Left lung (tissue), 14 donors: ENCODE measurements at regions of chr17 and their contacts with region 1.

Region 1: DNA sequence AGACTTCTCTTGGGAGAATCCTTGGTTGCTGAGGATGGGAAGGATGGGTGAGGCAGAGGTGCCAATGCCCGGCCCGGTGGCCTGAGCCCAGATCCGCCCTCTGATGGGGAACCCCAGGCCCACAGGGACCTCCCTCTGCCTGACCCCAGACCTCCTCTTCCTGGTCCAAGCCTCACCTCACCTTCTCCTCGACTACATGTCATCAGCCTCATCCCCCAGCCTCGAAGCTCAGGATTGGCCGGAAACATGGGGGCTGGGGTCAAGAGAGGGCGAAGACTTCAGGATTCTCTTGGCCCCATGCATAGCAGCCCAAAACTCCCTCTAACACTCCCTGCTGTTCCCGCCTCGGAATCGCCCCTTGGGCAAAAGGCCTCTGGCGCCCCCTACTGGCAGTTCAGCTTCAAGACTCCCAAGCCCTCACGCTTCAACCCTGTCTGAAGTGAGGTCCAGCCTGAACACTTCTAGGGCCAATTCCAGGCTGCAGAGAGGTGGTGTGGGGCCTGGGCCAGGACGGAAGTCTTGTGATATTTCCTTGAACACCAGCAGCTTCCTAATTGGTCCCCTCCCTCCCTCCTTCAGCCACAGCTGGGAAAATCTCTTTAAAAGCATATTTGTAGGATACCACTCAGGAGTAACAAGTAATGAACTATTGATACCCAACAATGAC is 47.2 kb downstream of the ARHGAP27 start:
- DNase-seq: peak; percentile 74 to 96 (median 90)
- ATAC-seq: peak; percentile 96
- H3K4me3 ChIP-seq: no peak overlapping the region
- H3K27ac ChIP-seq: no peak overlapping the region
- H3K4me1 ChIP-seq: peaks cover 0 to 10% of the 10 kb centered on the region in 2 donors
- H3K27me3 ChIP-seq: no peaks in the 10 kb centered on the region
- CTCF ChIP-seq: peak; percentile 97

Region 2: DNA sequence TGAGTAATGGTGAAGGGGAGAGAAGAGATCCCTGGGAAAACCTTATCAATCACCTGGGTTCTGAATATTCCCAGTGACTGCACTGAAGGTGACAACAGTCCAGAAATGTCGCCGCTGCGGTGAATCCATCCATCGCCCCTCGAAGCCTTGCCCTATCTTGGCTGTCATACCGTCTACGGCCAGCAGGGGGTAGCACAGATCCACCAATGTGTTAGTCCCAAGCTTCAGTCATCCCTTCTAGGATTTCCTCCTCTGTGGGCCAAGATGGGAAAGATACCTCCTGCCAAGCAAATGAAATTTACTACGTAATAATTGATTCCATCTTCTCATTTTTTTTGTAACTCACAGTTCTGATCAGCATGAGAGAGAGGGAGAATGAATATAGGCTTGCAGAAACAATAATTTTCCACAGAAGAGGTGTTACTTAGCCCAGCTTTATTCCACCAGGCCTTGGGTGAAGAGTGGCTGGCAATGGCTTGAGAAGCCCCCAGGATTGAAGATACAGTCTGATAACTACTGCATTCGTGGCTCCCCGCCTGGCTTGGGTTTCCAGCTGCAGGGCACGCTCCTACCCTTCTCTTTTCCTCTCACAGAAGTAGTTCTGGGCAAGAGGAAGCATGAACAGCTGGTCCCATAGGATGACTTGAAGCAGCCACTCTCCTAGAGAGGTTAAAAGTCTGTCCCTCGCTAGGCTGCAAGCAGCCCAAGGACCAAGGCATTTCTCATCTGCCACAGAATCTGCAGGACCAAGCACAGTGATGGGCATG is 166.4 kb before region 1 on chr17:
- intact Hi-C with region 1: loop called in 1 of 2 experiments (anchors 5 kb)
- DNase-seq: peak; percentile 79 to 92 (median 85)
- ATAC-seq: peak; percentile 91
- H3K4me3 ChIP-seq: no peak overlapping the region
- H3K27ac ChIP-seq: no peak overlapping the region
- H3K4me1 ChIP-seq: peaks cover 4 to 45% of the 10 kb centered on the region in 2 donors
- H3K27me3 ChIP-seq: peaks cover 0 to 20% of the 10 kb centered on the region in 2 donors
- CTCF ChIP-seq: peak; percentile 97 to 98

Region 3: GRCh38 chr17:45277216-45277849 is 108.1 kb before region 1 on chr17:
- intact Hi-C with region 1: loop called (anchors 5 to 10 kb)
- DNase-seq: peak; percentile 81 to 96 (median 93)
- ATAC-seq: peak; percentile 88
- H3K4me3 ChIP-seq: no peak overlapping the region
- H3K27ac ChIP-seq: peak overlapping the region; percentile 55 to 78
- H3K4me1 ChIP-seq: peaks cover 12 to 21% of the 10 kb centered on the region in 2 donors
- H3K27me3 ChIP-seq: no peaks in the 10 kb centered on the region
- CTCF ChIP-seq: peak; percentile 64 to 85

Region 4: DNA sequence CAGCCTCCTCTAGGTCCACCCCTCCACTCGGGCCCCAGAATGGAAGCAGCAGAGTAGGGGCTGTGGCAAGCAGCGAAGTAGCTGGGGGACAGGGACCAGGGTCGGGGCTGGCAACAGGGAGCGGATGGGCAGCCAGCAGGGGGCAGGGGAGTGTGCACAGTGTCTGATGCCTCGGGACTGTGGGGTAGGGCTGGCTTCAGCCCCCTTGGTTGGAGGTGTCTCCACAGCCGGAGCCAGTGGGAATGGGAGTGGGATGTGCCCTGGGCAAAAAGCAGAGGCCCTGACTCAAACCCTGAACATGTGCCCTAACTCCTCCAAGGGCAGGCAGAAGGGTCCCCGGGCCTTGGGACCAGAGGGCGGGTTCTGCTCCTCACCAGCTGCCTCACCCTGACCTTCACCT is 65.7 kb after region 1 on chr17:
- intact Hi-C with region 1: no loop called
- DNase-seq: peak in 1 of 4 donors; percentile 30
- ATAC-seq: no peak
- H3K4me3 ChIP-seq: no peak overlapping the region
- H3K27ac ChIP-seq: no peak overlapping the region
- H3K4me1 ChIP-seq: peaks cover 0 to 22% of the 10 kb centered on the region in 2 donors
- H3K27me3 ChIP-seq: no peaks in the 10 kb centered on the region
- CTCF ChIP-seq: no peak